ENCODE measurements at regions of chr17 and their contacts with region 1.

Region 1: DNA sequence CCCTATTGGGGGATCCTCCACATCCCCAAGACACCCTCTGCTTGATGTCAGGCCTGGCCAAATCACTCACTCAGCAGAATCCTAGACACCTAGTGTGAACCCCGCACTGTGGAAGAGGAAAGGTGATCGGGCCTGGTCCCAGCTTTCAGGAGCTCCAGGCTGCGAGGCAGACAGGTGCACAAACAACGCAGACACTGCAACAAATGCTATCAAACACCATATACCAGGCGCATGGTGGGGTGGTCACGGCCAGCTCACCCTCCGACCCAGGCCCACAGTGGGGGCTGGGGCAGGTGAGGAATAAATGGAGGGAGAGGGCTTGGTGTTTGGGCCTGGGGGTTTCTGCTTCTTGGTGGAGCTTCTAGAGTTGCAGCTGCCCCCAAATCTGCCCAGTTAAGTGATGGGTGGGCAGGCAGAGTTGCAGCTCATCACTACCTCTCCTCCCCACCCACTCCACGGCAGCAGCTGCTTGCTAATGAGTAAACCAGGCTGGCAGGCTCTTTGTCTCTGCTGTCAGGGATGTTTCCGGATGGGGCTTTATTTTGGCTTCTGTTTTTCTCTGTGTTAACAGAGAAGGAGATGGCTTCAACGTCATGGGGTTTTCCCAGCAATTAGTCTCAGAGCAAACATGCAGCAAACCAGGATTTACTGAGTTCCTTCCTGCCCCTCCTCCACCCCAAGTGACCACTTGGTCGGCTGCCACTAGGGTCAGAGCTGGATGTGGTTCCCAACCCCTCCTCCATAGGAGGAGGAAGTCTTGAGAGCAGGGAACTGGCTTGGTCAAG is 46.6 kb downstream of the PECAM1 start:
- DNase-seq: peak; percentile 80 to 97
- H3K4me3 ChIP-seq: no peak overlapping the region
- H3K27ac ChIP-seq: peak overlapping the region; percentile 79
- H3K4me1 ChIP-seq: peaks cover 41% of the 10 kb centered on the region
- H3K27me3 ChIP-seq: no peaks in the 10 kb centered on the region
- CTCF ChIP-seq: no peak

Region 2: DNA sequence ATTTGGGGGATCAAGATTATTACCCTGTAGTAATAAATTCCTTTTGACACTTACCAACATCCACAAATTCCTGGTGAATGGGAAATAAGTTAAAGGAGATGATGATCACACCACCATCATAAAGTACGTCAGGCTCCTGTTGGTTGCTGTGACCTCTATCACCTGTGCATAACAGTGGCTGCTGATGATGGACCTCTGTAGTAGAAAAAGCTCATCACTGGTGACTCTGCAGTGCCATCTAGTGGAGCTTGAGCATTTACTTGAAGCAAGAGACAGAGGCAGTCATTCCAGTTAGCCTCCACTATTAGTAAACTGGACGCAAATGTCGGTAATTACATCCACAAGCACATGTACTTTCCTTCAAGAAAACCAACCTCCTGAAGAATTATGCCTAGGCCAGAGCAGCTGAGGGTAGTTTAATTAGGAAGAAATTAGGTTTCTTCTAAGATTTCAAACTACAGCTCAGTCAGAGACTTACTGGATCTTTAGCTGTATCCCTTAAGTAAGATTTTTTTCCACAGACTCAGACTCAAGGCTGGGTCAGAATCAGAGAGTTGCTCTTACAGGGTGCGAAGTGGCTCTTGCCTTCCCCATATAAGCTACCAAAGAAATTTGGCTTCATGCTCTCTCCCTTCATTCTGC is 937.2 kb before region 1 on chr17:
- CTCF ChIA-PET with region 1: no interaction called
- POLR2A ChIA-PET with region 1: no interaction called
- intact Hi-C with region 1: no loop called
- DNase-seq: peak; percentile 55 to 71
- H3K4me3 ChIP-seq: no peak overlapping the region
- H3K27ac ChIP-seq: no peak overlapping the region
- H3K4me1 ChIP-seq: no peaks in the 10 kb centered on the region
- H3K27me3 ChIP-seq: no peaks in the 10 kb centered on the region
- CTCF ChIP-seq: peak; percentile 86

Region 3: DNA sequence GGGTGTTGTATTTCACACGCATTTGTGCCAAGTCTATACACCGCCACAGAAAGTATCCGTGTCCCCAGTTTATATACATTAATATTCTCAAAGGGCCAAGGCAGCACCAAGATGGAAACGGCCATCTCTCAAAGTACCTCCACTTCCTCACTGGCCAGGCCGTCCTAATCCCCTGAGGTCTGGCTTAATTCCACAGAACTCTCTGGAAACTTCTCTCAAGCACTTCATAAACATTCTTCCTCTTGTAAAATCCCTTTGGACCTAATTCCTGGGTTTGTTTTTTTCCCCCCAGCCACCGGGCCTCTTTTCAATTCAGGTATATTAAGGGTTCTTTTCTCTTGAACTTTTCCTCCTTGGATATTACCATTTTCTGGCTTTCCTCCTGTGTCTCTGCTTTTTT is 209.0 kb before region 1 on chr17:
- CTCF ChIA-PET with region 1: no interaction called
- POLR2A ChIA-PET with region 1: no interaction called
- intact Hi-C with region 1: no loop called
- DNase-seq: no peak
- H3K4me3 ChIP-seq: no peak overlapping the region
- H3K27ac ChIP-seq: no peak overlapping the region
- H3K4me1 ChIP-seq: no peaks in the 10 kb centered on the region
- H3K27me3 ChIP-seq: no peaks in the 10 kb centered on the region
- CTCF ChIP-seq: no peak

Region 4: GRCh38 chr17:64326395-64327054 is 17.5 kb before region 1 on chr17:
- CTCF ChIA-PET with region 1: no interaction called
- POLR2A ChIA-PET with region 1: interaction called, 4 read pairs
- intact Hi-C with region 1: loop called (anchors 2 kb)
- DNase-seq: peak; percentile 97 to 100
- H3K4me3 ChIP-seq: no peak overlapping the region
- H3K27ac ChIP-seq: peak overlapping the region; percentile 99
- H3K4me1 ChIP-seq: peaks cover 89% of the 10 kb centered on the region
- H3K27me3 ChIP-seq: no peaks in the 10 kb centered on the region
- CTCF ChIP-seq: no peak

Region 5: GRCh38 chr17:64331946-64332493 is 12.0 kb before region 1 on chr17:
- CTCF ChIA-PET with region 1: no interaction called
- POLR2A ChIA-PET with region 1: interaction called, 10 read pairs
- intact Hi-C with region 1: loop called (anchors 1 kb)
- DNase-seq: peak; percentile 87 to 96
- H3K4me3 ChIP-seq: peak overlapping the region; percentile 70; the same call in 1 of the 2 replicates
- H3K27ac ChIP-seq: peak overlapping the region; percentile 99
- H3K4me1 ChIP-seq: peaks cover 95% of the 10 kb centered on the region
- H3K27me3 ChIP-seq: no peaks in the 10 kb centered on the region
- CTCF ChIP-seq: no peak

Region 6: GRCh38 chr17:64357191-64357981 is 13.3 kb after region 1 on chr17:
- CTCF ChIA-PET with region 1: interaction called, 10 read pairs
- POLR2A ChIA-PET with region 1: no interaction called
- intact Hi-C with region 1: no loop called
- DNase-seq: no peak
- H3K4me3 ChIP-seq: no peak overlapping the region
- H3K27ac ChIP-seq: no peak overlapping the region
- H3K4me1 ChIP-seq: peaks cover 26% of the 10 kb centered on the region
- H3K27me3 ChIP-seq: no peaks in the 10 kb centered on the region
- CTCF ChIP-seq: no peak

Region 7: GRCh38 chr17:64459284-64459747 is 115.3 kb after region 1 on chr17:
- CTCF ChIA-PET with region 1: no interaction called
- POLR2A ChIA-PET with region 1: interaction called, 12 read pairs
- intact Hi-C with region 1: no loop called
- DNase-seq: peak; percentile 34 to 66
- H3K4me3 ChIP-seq: no peak overlapping the region
- H3K27ac ChIP-seq: peak overlapping the region; percentile 56
- H3K4me1 ChIP-seq: peaks cover 13% of the 10 kb centered on the region
- H3K27me3 ChIP-seq: no peaks in the 10 kb centered on the region
- CTCF ChIP-seq: no peak